ENCODE measurements at regions of chr11 and their contacts with region 1.

Region 1: GRCh38 chr11:65418711-65419459 is 3.7 kb upstream of the NEAT1 start:
- DNase-seq: peak; percentile 96 to 98
- H3K4me3 ChIP-seq: peak overlapping the region; percentile 26 to 76
- H3K27ac ChIP-seq: peak overlapping the region; percentile 98 to 99
- H3K4me1 ChIP-seq: peaks cover 0 to 7% of the 10 kb centered on the region in 2 donors
- H3K27me3 ChIP-seq: no peaks in the 10 kb centered on the region
- CTCF ChIP-seq: peak in 2 of 4 experiments; percentile 6 to 15
- POLR2A ChIP-seq: peak; percentile 55 to 75

Region 2: GRCh38 chr11:65382033-65382807 is 36.7 kb before region 1 on chr11 and contains the start of gene SLC25A45:
- intact Hi-C with region 1: loop called (anchors 5 kb)
- DNase-seq: peak; percentile 94 to 98
- H3K4me3 ChIP-seq: peak within 1 kb of the TSS; percentile 23 to 41
- H3K27ac ChIP-seq: peak within 1 kb of the TSS; percentile 95 to 97
- H3K4me1 ChIP-seq: peaks cover 13 to 17% of the 10 kb centered on the region in 2 donors
- H3K27me3 ChIP-seq: no peaks in the 10 kb centered on the region
- CTCF ChIP-seq: peak; percentile 91 to 99 (median 98)
- POLR2A ChIP-seq: peak; percentile 72 to 83
- total RNA-seq, gene SLC25A45: 0.29 to 5.9 (median 5.3) TPM in 3 of 4 donors, not detected in the other

Region 3: GRCh38 chr11:65477149-65477965 is 58.5 kb after region 1 on chr11:
- intact Hi-C with region 1: no loop called
- DNase-seq: peak; percentile 97
- H3K4me3 ChIP-seq: peak overlapping the region; percentile 57 to 64
- H3K27ac ChIP-seq: peak overlapping the region; percentile 97 to 98
- H3K4me1 ChIP-seq: peaks cover 13 to 22% of the 10 kb centered on the region in 2 donors
- H3K27me3 ChIP-seq: no peaks in the 10 kb centered on the region
- CTCF ChIP-seq: peak in 1 of 4 experiments; percentile 14
- POLR2A ChIP-seq: peak; percentile 96 to 100

Region 4: DNA sequence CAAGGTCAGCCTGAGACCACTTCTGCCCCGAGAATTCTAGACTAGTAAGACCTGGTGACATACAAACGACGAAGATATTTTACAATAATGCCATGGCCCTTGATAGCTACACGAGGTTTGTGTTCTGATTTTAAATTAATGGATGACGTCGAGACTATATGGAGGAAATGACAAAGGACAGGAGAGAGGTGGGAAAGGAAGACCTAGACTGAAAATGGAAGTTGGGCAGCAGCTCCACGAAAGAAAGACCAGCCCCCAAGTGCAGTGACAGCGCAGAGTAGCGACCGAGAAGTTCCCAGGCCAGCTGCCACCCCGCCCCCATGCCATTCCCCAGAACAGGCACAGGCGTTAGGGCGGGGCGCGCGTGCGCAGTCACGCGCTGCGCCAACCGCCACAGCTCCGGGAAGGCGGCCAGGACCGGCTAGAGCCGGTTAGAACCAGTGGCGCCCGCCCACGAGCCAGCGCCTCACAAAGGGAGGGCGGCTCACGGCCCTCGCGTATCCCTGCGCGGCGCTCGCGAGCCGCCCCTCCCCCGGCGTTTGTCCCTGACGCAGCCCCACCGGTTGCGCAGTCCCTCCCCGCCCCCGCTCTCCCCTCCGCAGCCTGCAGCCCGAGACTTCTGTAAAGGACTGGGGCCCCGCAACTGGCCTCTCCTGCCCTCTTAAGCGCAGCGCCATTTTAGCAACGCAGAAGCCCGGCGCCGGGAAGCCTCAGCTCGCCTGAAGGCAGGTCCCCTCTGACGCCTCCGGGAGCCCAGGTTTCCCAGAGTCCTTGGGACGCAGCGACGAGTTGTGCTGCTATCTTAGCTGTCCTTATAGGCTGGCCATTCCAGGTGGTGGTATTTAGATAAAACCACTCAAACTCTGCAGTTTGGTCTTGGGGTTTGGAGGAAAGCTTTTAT is 78.5 kb after region 1 on chr11:
- intact Hi-C with region 1: loop called (anchors 2 kb)
- DNase-seq: peak; percentile 99
- H3K4me3 ChIP-seq: peak overlapping the region; percentile 85 to 90
- H3K27ac ChIP-seq: peak overlapping the region; percentile 96 to 97
- H3K4me1 ChIP-seq: peaks cover 17 to 30% of the 10 kb centered on the region in 2 donors
- H3K27me3 ChIP-seq: no peaks in the 10 kb centered on the region
- CTCF ChIP-seq: peak in 3 of 4 experiments; percentile 11 to 38 (median 36)
- POLR2A ChIP-seq: peak; percentile 93 to 97

Region 5: DNA sequence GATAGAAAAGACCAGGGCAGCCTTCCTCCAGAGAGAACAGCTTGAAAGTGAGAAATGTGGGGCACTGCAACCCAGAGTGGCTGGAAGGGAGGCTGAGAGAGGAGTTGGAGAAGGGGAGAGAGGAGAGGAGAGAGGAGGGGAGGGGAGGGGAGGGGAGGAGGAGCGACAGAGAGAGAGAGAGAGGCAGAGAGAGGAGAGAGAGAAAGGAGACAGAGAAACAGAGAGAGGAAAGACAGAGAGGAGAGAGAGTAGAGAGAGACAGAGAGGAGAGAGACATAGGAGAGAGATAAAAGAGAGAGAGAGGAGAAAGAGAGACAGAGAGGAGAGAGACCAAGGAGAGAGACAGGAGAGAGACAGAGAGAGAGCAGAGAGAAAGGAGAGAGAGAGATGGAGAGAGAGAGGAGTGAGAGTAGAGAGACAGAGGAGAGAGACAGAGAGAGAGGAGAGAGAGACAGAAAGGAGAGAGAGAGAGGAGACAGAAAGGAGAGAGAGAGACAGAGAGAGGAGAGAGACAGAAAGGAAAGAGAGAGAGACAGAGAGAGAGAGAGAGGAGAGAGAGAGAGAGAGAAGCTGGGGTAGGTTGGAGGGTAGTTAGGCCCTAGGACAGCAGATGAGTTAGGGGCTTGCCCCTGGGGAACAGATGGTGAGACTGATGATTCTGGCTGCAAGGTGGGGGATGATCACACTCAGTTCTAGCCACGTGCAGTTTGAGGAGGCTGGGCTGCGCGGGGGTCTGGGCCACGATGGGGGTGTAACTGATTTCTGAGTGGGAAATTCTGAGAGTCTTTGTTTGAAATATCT is 97.5 kb after region 1 on chr11:
- intact Hi-C with region 1: loop called (anchors 5 kb)
- DNase-seq: no peak
- H3K4me3 ChIP-seq: no peak overlapping the region
- H3K27ac ChIP-seq: no peak overlapping the region
- H3K4me1 ChIP-seq: no peaks in the 10 kb centered on the region
- H3K27me3 ChIP-seq: no peaks in the 10 kb centered on the region
- CTCF ChIP-seq: no peak
- POLR2A ChIP-seq: no peak

Region 6: DNA sequence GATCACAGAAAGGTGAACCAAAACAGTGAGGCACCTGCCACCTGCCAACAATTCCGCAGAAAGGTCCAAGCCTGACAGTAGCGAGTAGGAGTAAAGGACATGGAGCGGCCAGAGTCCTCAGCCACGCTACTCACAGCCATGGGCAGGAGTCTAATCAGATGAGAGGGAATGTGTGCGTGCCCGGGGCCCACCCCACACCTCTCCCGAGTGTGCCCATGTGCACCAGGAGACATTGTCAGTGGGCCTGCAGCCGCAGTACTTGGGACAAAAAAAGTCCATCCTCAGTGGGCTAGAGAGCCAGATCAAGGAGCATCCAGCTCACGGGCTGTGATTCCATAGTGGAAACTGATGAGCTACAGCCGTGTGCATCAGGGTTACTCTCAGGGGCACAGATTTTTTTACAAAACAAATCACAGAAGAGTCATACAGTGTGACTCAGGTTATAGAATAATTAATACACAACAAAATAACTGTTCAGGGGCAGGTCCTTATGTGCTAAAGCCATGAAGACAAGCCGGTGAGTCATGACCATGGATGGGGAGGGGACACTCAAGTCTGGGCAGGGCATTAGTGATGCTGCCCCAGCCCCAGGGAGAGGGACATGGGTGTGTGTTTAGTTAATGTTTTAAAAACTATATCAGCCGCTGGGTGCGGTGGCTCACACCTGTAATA is 554.7 kb after region 1 on chr11:
- intact Hi-C with region 1: no loop called
- DNase-seq: no peak
- H3K4me3 ChIP-seq: no peak overlapping the region
- H3K27ac ChIP-seq: no peak overlapping the region
- H3K4me1 ChIP-seq: no peaks in the 10 kb centered on the region
- H3K27me3 ChIP-seq: no peaks in the 10 kb centered on the region
- CTCF ChIP-seq: no peak
- POLR2A ChIP-seq: no peak

Measured in uterus (tissue), 4 donors.